Cardiac septum (tissue), 1 donor: ENCODE measurements at regions of chr14 and their contacts with region 1.

Region 1: GRCh38 chr14:75069045-75069810 is at the start of gene ZC2HC1C:
- DNase-seq: peak; percentile 98
- total RNA-seq, gene ZC2HC1C: 5.2 TPM

Region 2: DNA sequence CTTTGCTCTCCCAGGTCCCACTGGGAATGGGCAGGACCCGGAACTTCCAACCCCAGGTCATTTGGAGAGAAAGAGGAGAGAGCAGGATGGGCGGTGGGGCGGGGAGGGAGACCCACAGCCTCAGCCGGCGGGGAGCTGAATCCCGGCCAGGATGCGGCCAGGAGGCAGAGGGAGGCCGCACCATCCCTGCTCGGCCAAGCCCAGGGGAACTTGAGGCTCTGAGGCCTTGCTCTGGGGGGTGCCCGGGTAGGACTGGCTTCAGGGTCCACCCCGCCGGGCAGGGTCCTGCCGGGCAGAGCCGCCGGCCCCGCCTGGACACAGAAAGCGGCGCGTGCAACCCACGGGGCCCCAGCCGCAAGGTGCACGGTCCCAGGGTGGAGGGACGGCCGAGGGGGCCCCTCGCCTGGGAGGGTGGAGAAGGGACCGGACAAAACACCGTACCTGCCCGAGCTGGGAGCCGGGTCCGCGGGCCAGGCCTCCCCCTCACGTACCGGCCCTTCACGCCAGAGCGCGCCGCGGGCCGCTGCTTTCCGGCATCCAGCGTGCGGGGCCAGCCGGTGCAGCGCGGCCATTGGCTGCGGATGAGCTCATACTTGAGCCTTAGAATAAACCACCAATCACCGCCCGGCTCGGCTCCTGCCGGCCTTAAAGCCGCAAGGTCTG is 146.4 kb before region 1 on chr14 and contains the start of gene RPS6KL1:
- intact Hi-C with region 1: loop called (anchors 5 kb)
- DNase-seq: peak; percentile 90
- total RNA-seq, gene RPS6KL1: 19.8 TPM

Region 3: DNA sequence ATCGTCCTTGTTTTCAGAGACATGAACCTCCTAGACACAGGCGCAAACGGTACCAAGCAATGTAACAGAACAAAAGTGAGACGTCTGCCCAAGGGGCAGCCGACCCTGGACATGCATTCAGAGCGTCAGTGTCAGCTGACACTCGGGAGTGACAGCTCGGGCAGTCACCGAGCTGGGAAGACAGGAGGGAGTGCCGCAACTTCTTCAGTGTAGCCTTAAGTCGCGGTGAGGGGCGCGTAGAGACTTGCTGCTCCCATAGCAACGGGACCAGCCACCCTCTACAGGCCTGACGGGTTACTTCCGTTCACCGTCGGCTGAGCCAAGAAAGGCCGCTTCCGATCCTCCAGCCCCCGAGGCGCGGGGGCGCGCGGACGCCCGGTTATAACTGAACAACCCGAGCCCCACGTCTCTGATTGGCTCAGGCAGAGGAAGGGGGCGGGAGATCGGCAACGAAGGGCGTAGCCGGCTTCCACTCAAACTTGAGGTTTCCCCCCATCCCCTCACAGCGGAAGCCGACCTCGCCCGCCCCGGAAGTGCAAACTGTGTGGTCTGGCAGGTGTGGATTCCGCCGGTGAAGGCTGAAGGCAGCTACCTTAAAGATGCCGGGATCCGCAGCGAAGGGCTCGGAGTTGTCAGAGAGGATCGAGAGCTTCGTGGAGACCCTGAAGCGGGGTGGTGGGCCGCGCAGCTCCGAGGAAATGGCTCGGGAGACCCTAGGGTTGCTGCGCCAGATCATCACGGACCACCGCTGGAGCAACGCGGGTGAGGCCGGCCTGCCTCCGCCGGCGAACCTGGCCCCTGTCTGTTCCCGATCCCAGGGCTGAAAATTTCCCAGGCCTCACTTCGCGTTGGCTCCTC is 66.6 kb before region 1 on chr14 and contains the start of gene EIF2B2:
- intact Hi-C with region 1: loop called (anchors 5 kb)
- DNase-seq: peak; percentile 97
- total RNA-seq, gene EIF2B2: 36.4 TPM

Region 4: GRCh38 chr14:75132382-75133086 is 63.3 kb after region 1 on chr14:
- intact Hi-C with region 1: no loop called
- DNase-seq: no peak

Region 5: DNA sequence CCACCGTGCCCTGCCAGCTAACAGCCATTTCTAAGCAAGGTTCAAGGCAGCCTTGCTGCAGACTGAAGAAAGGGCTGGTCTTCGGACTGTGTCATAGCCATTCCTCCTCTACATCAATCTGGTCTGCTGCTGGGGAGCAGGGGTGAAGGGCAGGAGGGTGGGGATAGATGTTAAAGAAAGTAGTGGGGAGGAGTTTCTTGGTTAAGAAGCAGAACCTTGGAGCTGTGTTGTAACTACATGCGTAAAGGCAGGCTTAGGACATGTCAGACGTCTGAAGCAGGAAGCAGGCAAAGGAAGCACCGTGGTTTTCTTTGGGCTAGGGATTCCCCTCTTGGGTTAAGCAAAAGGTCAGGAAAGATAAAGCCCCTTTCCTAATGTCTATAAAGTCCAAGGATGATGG is 75.7 kb after region 1 on chr14:
- intact Hi-C with region 1: no loop called
- DNase-seq: no peak

Region 6: GRCh38 chr14:75340921-75341320 is 271.7 kb after region 1 on chr14:
- intact Hi-C with region 1: no loop called
- DNase-seq: peak; percentile 90